Caco-2 (cell line): ENCODE measurements at regions of chr18 and their contacts with region 1.

Region 1: GRCh38 chr18:23684515-23685197 is 4.6 kb upstream of the LAMA3 start:
- DNase-seq: peak; percentile 42 to 46
- H3K4me3 ChIP-seq: no peak overlapping the region
- H3K4me3 Mint-ChIP-seq: no peak overlapping the region
- H3K27ac Mint-ChIP-seq: peak overlapping the region; percentile 27
- H3K4me1 ChIP-seq: peaks cover 6% of the 10 kb centered on the region; the same call in 1 of the 2 replicates
- H3K4me1 Mint-ChIP-seq: no peaks in the 10 kb centered on the region
- H3K27me3 ChIP-seq: no peaks in the 10 kb centered on the region
- H3K27me3 Mint-ChIP-seq: no peaks in the 10 kb centered on the region
- CTCF ChIP-seq: no peak

Region 2: GRCh38 chr18:23629444-23629946 is 55.2 kb before region 1 on chr18:
- CTCF ChIA-PET with region 1: no interaction called
- POLR2A ChIA-PET with region 1: no interaction called
- intact Hi-C with region 1: loop called (anchors 5 kb)
- DNase-seq: peak; percentile 50 to 58
- H3K4me3 ChIP-seq: no peak overlapping the region
- H3K4me3 Mint-ChIP-seq: no peak overlapping the region
- H3K27ac Mint-ChIP-seq: no peak overlapping the region
- H3K4me1 ChIP-seq: peaks cover 10% of the 10 kb centered on the region
- H3K4me1 Mint-ChIP-seq: no peaks in the 10 kb centered on the region
- H3K27me3 ChIP-seq: no peaks in the 10 kb centered on the region
- H3K27me3 Mint-ChIP-seq: no peaks in the 10 kb centered on the region
- CTCF ChIP-seq: no peak

Region 3: GRCh38 chr18:23650968-23651927 is 33.4 kb before region 1 on chr18:
- CTCF ChIA-PET with region 1: no interaction called
- POLR2A ChIA-PET with region 1: no interaction called
- intact Hi-C with region 1: loop called (anchors 1 kb)
- DNase-seq: peak; percentile 45 to 50
- H3K4me3 ChIP-seq: no peak overlapping the region
- H3K4me3 Mint-ChIP-seq: peak overlapping the region; percentile 55
- H3K27ac Mint-ChIP-seq: peak overlapping the region; percentile 85
- H3K4me1 ChIP-seq: peaks cover 36% of the 10 kb centered on the region
- H3K4me1 Mint-ChIP-seq: peaks cover 14% of the 10 kb centered on the region
- H3K27me3 ChIP-seq: no peaks in the 10 kb centered on the region
- H3K27me3 Mint-ChIP-seq: no peaks in the 10 kb centered on the region
- CTCF ChIP-seq: no peak